Left colon (tissue), 2 donors: ENCODE measurements at regions of chr11 and their contacts with region 1.

Region 1: DNA sequence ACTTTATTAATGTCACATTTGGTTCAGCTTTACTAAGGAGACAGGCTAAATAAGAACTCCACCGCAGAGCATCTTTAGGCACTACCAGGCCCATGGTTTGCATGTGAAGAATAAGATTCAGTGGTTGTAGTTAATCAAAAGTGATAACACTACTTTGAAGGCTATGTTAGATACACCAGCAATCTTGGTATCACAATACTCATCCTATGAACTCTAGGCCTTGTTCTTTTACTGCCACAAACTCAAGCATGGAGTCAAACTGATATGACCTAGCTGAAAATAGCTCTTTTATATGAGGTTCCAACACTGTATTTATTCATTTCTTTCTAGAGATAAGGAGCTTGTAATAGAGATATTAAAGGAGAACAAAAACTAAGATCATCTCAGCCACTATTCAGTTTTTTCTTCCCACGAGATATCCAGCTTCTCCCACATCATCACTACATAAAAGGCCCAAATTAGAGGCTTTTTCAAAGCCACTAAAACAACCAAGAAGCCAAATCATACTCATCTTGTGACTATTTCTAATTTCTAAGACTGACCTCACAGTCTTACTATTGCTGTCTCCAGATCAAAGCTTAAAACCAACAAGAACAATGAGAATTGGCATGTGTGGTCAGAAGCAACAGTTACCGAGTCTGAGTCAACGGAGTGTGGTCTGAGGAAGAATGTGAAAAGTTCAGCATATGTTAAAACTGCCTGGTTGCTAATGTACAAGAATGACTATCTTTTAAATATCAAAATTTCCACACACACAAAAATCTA is 25.1 kb upstream of the GUCY1A2 start:
- DNase-seq: no peak
- ATAC-seq: no peak

Region 2: GRCh38 chr11:106156290-106156937 is 887.0 kb before region 1 on chr11:
- intact Hi-C with region 1: loop called in 1 of 2 experiments (anchors 10 kb)
- DNase-seq: no peak
- ATAC-seq: no peak